Activated CD4-positive, alpha-beta T cell treated with anti-CD3 and anti-CD28 coated beads, Interleukin-2, amount 10 ng/mL, durations not matched to agents 24 days and 14 days (primary cell): ENCODE measurements at regions of chr19 and their contacts with region 1.

Region 1: DNA sequence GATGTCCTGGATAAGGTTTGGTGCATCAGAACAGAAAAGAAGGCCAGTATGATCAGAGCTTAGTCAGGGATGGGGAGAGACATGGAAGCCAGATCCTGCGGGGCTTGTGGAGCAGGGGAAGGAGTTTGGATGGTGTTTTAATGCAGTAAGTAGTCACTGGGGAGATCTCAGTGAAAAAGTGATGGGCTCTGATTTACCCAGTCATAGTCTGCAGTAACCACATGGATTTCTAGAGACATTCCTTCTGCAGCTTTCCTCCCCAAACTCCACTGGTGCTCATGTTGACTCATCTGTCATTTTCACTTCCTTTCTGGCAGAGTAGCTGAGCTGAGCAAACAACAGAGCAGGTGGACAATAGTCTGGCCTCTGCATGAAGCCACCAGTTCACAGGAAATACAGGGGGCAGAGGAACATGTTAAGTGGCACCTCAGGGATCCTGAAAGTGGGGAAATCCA is 144.1 kb downstream of the DPF1 start:
- DNase-seq: no peak
- H3K4me3 Mint-ChIP-seq: peak overlapping the region; percentile 32
- H3K27ac Mint-ChIP-seq: peak overlapping the region; percentile 85
- H3K4me1 Mint-ChIP-seq: peaks cover 14% of the 10 kb centered on the region
- H3K27me3 Mint-ChIP-seq: no peaks in the 10 kb centered on the region

Region 2: DNA sequence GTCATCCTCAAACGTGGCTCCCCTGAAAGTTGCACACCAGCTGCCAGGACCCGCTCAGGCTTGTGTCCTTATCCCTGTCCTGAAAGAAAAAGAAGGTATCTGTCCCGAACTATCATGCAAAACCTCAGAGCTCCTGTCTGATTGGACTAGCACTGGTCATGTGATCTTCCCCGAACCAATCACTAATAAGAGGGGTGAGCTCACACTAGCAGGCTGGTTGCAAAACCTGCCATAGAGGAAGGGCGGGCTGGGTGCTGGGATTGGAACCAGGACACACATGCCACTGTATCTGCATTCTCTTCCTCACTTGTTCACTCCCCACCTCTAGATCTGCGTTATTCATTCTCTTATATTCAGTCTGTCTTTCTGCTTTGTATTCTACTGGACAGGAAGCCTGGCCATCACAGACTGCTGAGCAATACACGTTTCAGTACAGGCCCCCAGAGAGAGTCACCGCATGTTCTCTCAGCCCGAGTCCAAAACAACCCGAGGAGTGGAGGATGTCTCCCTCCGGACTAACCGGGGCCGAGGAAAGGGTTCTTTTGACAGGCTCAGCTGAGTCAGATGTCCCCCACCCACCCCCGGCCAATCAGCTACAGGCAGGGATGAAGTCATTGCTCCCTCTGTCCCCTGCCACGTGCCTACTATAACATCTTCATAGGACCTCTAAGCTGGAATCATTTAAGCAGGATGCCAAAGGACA is 75.3 kb before region 1 on chr19:
- intact Hi-C with region 1: loop called (anchors 10 kb)
- DNase-seq: no peak
- H3K4me3 Mint-ChIP-seq: no peak overlapping the region
- H3K27ac Mint-ChIP-seq: no peak overlapping the region
- H3K4me1 Mint-ChIP-seq: peaks cover 3% of the 10 kb centered on the region
- H3K27me3 Mint-ChIP-seq: no peaks in the 10 kb centered on the region

Region 3: GRCh38 chr19:38049105-38049649 is 30.8 kb before region 1 on chr19:
- intact Hi-C with region 1: loop called (anchors 1 kb)
- DNase-seq: peak; percentile 89
- H3K4me3 Mint-ChIP-seq: peak overlapping the region; percentile 83
- H3K27ac Mint-ChIP-seq: peak overlapping the region; percentile 97
- H3K4me1 Mint-ChIP-seq: peaks cover 35% of the 10 kb centered on the region
- H3K27me3 Mint-ChIP-seq: no peaks in the 10 kb centered on the region